ENCODE measurements at regions of chr20 and their contacts with region 1.

Region 1: GRCh38 chr20:19205977-19206396 is 6.5 kb upstream of the SLC24A3 start:
- DNase-seq: peak; percentile 85
- H3K4me3 ChIP-seq: no peak overlapping the region
- H3K27ac ChIP-seq: no peak overlapping the region
- H3K4me1 ChIP-seq: no peaks in the 10 kb centered on the region
- H3K27me3 ChIP-seq: no peaks in the 10 kb centered on the region
- CTCF ChIP-seq: peak; percentile 91

Region 2: GRCh38 chr20:18904624-18905023 is 301.4 kb before region 1 on chr20:
- intact Hi-C with region 1: loop called (anchors 10 kb)
- DNase-seq: no peak
- H3K4me3 ChIP-seq: no peak overlapping the region
- H3K27ac ChIP-seq: no peak overlapping the region
- H3K4me1 ChIP-seq: no peaks in the 10 kb centered on the region
- H3K27me3 ChIP-seq: no peaks in the 10 kb centered on the region
- CTCF ChIP-seq: no peak

Region 3: GRCh38 chr20:19583532-19584175 is 377.7 kb after region 1 on chr20:
- intact Hi-C with region 1: loop called (anchors 5 kb)
- DNase-seq: peak; percentile 68
- H3K4me3 ChIP-seq: no peak overlapping the region
- H3K27ac ChIP-seq: no peak overlapping the region
- H3K4me1 ChIP-seq: no peaks in the 10 kb centered on the region
- H3K27me3 ChIP-seq: no peaks in the 10 kb centered on the region
- CTCF ChIP-seq: peak; percentile 75